Breast epithelium (tissue), 4 donors: ENCODE measurements at regions of chr16 and their contacts with region 1.

Region 1: DNA sequence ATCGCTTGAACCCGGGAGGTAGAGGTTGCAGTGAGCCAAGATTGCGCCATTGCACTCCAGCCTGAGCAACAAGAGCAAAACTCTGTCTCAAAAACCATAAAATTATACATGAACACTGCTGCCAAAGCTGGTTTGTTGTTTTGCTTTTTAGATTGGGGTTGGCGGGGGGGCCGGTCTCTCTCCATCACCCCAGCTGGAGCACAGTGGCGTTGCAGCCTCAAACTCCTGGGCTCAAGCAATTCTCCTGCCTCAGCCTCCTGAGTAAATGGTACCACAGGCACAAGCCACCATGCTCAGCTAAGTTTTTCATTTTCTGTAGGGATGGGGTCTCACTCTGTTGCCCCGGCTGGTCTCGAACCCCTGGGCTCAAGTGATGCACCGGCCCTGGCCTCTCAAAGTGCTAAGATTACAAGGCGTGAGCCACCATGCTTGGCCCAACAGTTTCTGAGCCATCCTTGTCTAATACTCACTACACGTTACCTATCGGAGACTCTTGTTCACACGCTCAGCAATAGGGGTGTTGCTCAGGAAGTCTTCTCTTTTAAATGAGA is 11.7 kb downstream of the WDR59 start:
- DNase-seq: no peak
- H3K4me3 ChIP-seq: no peak overlapping the region
- H3K27ac ChIP-seq: no peak overlapping the region
- H3K4me1 ChIP-seq: no peaks in the 10 kb centered on the region
- H3K27me3 ChIP-seq: no peaks in the 10 kb centered on the region
- CTCF ChIP-seq: no peak
- POLR2A ChIP-seq: no peak

Region 2: GRCh38 chr16:74695450-74696422 is 277.5 kb before region 1 on chr16:
- intact Hi-C with region 1: loop called (anchors 5 kb)
- DNase-seq: peak; percentile 61 to 79
- H3K4me3 ChIP-seq: peak overlapping the region; percentile 30 to 69 (median 52)
- H3K27ac ChIP-seq: peak overlapping the region; percentile 35 to 74
- H3K4me1 ChIP-seq: no peaks in the 10 kb centered on the region
- H3K27me3 ChIP-seq: no peaks in the 10 kb centered on the region
- CTCF ChIP-seq: no peak
- POLR2A ChIP-seq: no peak